ENCODE measurements at regions of chr14 and their contacts with region 1.

Region 1: DNA sequence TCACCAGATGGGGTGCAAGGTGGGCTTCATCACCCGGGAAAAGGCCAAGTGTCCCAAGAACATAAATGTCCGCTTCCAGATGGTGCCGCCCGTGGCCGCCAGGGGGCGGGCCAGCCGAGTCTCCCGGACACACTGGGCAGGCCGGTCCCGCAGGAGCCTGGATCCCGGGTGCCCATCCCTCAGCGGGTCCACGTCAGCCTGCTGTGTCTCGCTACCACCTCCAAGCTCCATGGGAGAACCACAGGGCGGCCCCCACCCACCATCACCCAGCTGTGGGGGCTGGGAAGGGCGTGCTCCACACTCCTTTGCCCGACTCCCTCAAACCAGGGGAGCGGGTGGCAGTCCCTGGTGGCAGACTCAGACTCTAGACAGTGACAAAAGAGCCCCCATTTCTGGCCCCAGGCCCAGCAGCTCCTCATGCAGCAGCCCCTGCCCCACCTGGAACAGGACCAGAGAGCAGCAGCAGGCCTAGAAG is 22.0 kb upstream of the NUDT14 start:
- DNase-seq: peak; percentile 91
- H3K4me3 Mint-ChIP-seq: no peak overlapping the region
- H3K27ac Mint-ChIP-seq: no peak overlapping the region
- H3K4me1 Mint-ChIP-seq: peaks cover 7% of the 10 kb centered on the region
- H3K27me3 Mint-ChIP-seq: peaks cover 14% of the 10 kb centered on the region

Region 2: DNA sequence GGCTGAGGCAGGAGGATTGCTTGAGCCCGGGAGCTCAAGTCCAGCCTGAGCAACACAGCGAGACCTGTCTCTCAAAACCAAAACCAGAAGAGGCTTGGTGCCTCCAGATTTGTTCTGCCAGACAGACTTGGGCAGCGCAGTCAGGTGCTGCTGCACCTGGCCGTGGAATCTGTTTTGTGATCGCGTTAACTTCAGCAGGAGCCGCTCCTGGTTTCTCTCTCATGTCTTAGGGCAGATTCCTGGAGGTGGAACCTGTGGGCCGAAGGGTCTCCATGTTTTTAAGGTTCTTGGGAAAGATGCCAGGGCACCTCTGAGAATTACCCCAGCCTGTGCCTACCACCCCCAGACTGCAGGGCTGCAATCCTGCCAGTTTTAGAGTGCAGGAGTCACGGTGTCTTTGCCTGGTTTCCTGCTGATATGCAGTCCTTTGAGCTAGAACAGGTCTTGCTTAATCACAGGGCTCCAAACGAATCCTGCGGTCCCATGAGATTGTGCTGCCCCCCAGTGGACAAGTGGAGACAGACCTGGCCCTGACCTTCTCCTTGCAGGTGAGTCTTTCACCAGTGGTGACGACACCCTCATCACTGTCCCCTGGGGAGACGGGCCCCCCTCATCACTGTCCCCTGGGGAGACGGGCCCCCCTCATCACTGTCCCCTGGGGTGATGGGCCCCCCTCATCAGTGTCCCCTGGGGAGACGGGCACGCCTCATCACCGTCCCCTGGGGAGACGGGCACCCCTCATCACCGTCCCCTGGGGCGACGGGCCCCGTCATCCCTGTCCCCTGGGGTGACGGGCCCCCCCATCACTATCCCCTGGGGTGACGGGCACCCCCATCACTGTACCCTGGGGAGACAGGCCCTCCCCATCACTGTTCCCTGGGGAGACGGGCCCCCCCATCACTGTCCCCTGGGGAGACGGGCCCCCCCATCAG is 149.1 kb after region 1 on chr14:
- intact Hi-C with region 1: loop called (anchors 1 kb)
- DNase-seq: peak; percentile 96
- H3K4me3 Mint-ChIP-seq: no peak overlapping the region
- H3K27ac Mint-ChIP-seq: no peak overlapping the region
- H3K4me1 Mint-ChIP-seq: peaks cover 2% of the 10 kb centered on the region
- H3K27me3 Mint-ChIP-seq: no peaks in the 10 kb centered on the region